Caco-2 (cell line): ENCODE measurements at regions of chr14 and their contacts with region 1.

Region 1: GRCh38 chr14:65164068-65164824 is 61.9 kb upstream of the MAX start:
- DNase-seq: peak in 1 of 2 experiments; percentile 62
- H3K4me3 ChIP-seq: no peak overlapping the region
- H3K4me3 Mint-ChIP-seq: no peak overlapping the region
- H3K27ac Mint-ChIP-seq: peak overlapping the region; percentile 36
- H3K4me1 ChIP-seq: peaks cover 8% of the 10 kb centered on the region
- H3K4me1 Mint-ChIP-seq: peaks cover 6% of the 10 kb centered on the region
- H3K27me3 ChIP-seq: no peaks in the 10 kb centered on the region
- H3K27me3 Mint-ChIP-seq: no peaks in the 10 kb centered on the region
- CTCF ChIP-seq: peak; percentile 68 to 81

Region 2: GRCh38 chr14:64942531-64943111 is 221.6 kb before region 1 on chr14 and contains the start of gene GPX2:
- CTCF ChIA-PET with region 1: no interaction called
- POLR2A ChIA-PET with region 1: no interaction called
- intact Hi-C with region 1: no loop called
- DNase-seq: peak; percentile 77 to 88
- H3K4me3 ChIP-seq: peak within 1 kb of the TSS; percentile 14
- H3K4me3 Mint-ChIP-seq: peak within 1 kb of the TSS; percentile 61
- H3K27ac Mint-ChIP-seq: peak within 1 kb of the TSS; percentile 32
- H3K4me1 ChIP-seq: peaks cover 62% of the 10 kb centered on the region
- H3K4me1 Mint-ChIP-seq: peaks cover 65% of the 10 kb centered on the region
- H3K27me3 ChIP-seq: no peaks in the 10 kb centered on the region
- H3K27me3 Mint-ChIP-seq: no peaks in the 10 kb centered on the region
- CTCF ChIP-seq: no peak
- total RNA-seq, gene GPX2: 39.3 and 48.1 TPM in 2 replicates

Region 3: DNA sequence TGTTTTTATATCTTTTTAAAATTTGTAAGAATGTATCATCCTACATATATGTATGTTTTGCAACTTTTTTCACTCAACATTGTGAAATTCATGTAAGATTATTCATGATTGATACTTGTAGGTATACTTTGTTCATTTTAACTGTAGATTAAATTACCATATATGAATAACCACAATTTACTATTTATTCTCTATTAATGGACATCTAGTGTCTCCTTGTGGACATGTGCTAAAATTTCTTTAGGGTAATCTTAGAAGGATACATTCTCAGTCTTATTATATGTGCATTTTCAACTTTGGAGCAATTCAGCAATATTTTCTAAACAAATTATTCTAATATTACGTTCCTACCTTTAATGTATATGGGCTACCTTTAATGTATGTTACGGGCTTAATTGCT is 440.7 kb after region 1 on chr14:
- CTCF ChIA-PET with region 1: no interaction called
- POLR2A ChIA-PET with region 1: no interaction called
- intact Hi-C with region 1: loop called (anchors 1 kb)
- DNase-seq: no peak
- H3K4me3 ChIP-seq: no peak overlapping the region
- H3K4me3 Mint-ChIP-seq: no peak overlapping the region
- H3K27ac Mint-ChIP-seq: no peak overlapping the region
- H3K4me1 ChIP-seq: no peaks in the 10 kb centered on the region
- H3K4me1 Mint-ChIP-seq: no peaks in the 10 kb centered on the region
- H3K27me3 ChIP-seq: no peaks in the 10 kb centered on the region
- H3K27me3 Mint-ChIP-seq: no peaks in the 10 kb centered on the region
- CTCF ChIP-seq: peak in 1 of 2 experiments; percentile 12

Region 4: GRCh38 chr14:65824285-65824977 is 660.2 kb after region 1 on chr14:
- CTCF ChIA-PET with region 1: interaction called, 33 read pairs
- POLR2A ChIA-PET with region 1: no interaction called
- intact Hi-C with region 1: loop called (anchors 1 kb)
- DNase-seq: peak; percentile 56 to 66
- H3K4me3 ChIP-seq: no peak overlapping the region
- H3K4me3 Mint-ChIP-seq: no peak overlapping the region
- H3K27ac Mint-ChIP-seq: no peak overlapping the region
- H3K4me1 ChIP-seq: no peaks in the 10 kb centered on the region
- H3K4me1 Mint-ChIP-seq: no peaks in the 10 kb centered on the region
- H3K27me3 ChIP-seq: peaks cover 2% of the 10 kb centered on the region; the same call in 1 of the 2 replicates
- H3K27me3 Mint-ChIP-seq: peaks cover 4% of the 10 kb centered on the region
- CTCF ChIP-seq: peak; percentile 84 to 85

Region 5: DNA sequence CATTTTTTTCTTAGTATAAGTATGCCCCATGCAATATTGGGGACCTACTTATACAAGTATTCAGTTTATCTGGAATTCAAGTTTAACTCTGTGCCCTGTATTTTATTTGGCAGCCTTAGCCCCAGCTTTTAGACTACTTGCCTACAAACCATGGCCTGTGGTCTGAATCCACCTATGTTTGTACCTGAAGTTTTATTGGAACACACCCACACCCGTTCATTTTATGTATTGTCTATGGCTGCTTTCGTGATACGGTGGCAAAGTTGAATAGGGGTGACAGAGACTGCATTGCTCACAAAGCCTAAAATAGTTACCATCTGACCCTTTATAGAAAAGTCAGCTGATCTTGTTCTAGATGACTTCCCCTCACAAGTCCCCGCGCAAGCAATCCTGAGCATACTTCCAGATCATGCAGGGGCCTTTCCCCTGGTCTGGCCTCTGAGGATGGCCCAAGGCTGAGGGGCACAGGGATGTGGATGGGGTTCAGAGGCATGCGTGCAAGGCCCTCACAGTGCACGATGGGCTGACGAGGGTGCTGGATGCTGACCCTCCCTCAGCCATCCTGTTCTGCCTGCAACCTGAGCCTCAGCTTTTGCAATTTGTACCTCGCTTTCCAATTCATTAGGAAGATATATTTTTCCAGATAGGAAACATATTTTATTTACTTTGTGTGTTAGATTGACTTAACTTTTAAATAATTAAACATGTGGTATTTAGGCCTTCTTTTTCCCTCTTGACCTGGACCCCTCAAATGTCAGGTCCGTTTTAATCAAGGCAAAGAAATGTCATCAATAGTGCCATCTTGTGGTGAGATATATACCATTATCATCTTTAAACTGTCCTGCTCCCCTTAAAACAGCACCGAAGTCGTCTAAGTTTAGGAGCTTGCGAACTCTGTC is 794.7 kb after region 1 on chr14:
- CTCF ChIA-PET with region 1: interaction called, 3 read pairs
- POLR2A ChIA-PET with region 1: no interaction called
- intact Hi-C with region 1: loop called (anchors 1 kb)
- DNase-seq: no peak
- H3K4me3 ChIP-seq: no peak overlapping the region
- H3K4me3 Mint-ChIP-seq: no peak overlapping the region
- H3K27ac Mint-ChIP-seq: no peak overlapping the region
- H3K4me1 ChIP-seq: no peaks in the 10 kb centered on the region
- H3K4me1 Mint-ChIP-seq: no peaks in the 10 kb centered on the region
- H3K27me3 ChIP-seq: peaks cover 2% of the 10 kb centered on the region
- H3K27me3 Mint-ChIP-seq: peaks cover 6% of the 10 kb centered on the region
- CTCF ChIP-seq: peak in 1 of 2 experiments; percentile 38

Region 6: GRCh38 chr14:66070509-66071319 is 906.5 kb after region 1 on chr14:
- CTCF ChIA-PET with region 1: interaction called, 3 read pairs
- POLR2A ChIA-PET with region 1: no interaction called
- intact Hi-C with region 1: loop called (anchors 1 kb)
- DNase-seq: peak; percentile 62 to 78
- H3K4me3 ChIP-seq: no peak overlapping the region
- H3K4me3 Mint-ChIP-seq: no peak overlapping the region
- H3K27ac Mint-ChIP-seq: no peak overlapping the region
- H3K4me1 ChIP-seq: no peaks in the 10 kb centered on the region
- H3K4me1 Mint-ChIP-seq: no peaks in the 10 kb centered on the region
- H3K27me3 ChIP-seq: no peaks in the 10 kb centered on the region; the same call in 1 of the 2 replicates
- H3K27me3 Mint-ChIP-seq: peaks cover 22% of the 10 kb centered on the region
- CTCF ChIP-seq: peak; percentile 85 to 90